ENCODE measurements at regions of chr3 and their contacts with region 1.

Region 1: GRCh38 chr3:71006810-71007785 is 576.4 kb downstream of the FOXP1 start:
- DNase-seq: no peak
- H3K4me3 Mint-ChIP-seq: no peak overlapping the region
- H3K27ac Mint-ChIP-seq: no peak overlapping the region
- H3K4me1 Mint-ChIP-seq: peaks cover 59% of the 10 kb centered on the region
- H3K27me3 Mint-ChIP-seq: no peaks in the 10 kb centered on the region

Region 2: GRCh38 chr3:70982700-70983140 is 24.4 kb before region 1 on chr3:
- intact Hi-C with region 1: loop called (anchors 2 kb)
- DNase-seq: peak; percentile 24
- H3K4me3 Mint-ChIP-seq: peak overlapping the region; percentile 52
- H3K27ac Mint-ChIP-seq: peak overlapping the region; percentile 95
- H3K4me1 Mint-ChIP-seq: peaks cover 57% of the 10 kb centered on the region
- H3K27me3 Mint-ChIP-seq: no peaks in the 10 kb centered on the region

Region 3: GRCh38 chr3:71057526-71057894 is 50.4 kb after region 1 on chr3:
- intact Hi-C with region 1: loop called (anchors 1 kb)
- DNase-seq: no peak
- H3K4me3 Mint-ChIP-seq: peak overlapping the region; percentile 58
- H3K27ac Mint-ChIP-seq: peak overlapping the region; percentile 77
- H3K4me1 Mint-ChIP-seq: peaks cover 41% of the 10 kb centered on the region
- H3K27me3 Mint-ChIP-seq: peaks cover 3% of the 10 kb centered on the region

Region 4: DNA sequence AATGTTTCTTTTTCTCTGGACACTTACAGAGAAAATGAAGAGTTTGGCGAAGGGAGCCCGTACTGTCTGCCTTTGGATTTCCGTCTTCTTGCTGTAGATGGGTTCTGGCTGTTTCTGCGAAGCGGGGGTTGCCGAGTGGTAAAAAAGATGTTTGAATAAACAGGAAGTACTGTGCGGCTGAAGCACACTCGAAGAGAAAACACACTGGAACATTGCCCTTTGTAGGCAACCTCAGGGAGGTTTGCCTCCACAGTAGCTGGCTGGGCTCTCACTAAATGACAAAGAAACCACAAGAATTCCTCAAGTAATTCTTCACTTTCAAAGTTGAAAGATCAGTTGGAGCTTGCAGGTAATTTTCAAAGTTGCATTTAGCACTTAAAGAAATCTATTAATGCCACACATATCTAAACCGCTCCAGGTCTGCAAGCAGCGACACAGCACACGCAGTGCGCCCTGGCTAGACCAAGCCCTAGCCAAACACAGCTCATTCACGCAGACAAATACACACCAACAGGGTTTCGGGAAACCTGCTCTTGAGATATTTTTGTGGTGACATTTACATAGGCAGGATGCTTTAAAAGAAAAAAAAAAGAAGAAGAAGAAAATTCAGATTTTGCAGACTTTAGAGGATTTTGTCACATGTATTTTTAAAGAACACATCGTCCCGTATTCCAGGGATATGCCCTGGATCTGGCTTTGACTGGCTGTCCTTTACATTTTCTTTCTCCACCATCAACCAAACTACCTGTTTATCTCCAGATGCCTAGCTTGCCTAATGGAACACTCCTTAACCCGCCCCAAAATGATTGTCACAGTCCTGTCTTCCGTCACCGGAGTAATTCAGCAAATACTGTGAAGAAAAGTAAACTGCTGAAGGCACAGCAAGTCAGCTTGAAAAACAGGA is 123.6 kb after region 1 on chr3:
- intact Hi-C with region 1: loop called (anchors 1 kb)
- DNase-seq: peak; percentile 67
- H3K4me3 Mint-ChIP-seq: peak overlapping the region; percentile 89
- H3K27ac Mint-ChIP-seq: peak overlapping the region; percentile 93
- H3K4me1 Mint-ChIP-seq: peaks cover 65% of the 10 kb centered on the region
- H3K27me3 Mint-ChIP-seq: no peaks in the 10 kb centered on the region

Region 5: GRCh38 chr3:71389911-71390573 is 382.9 kb after region 1 on chr3:
- intact Hi-C with region 1: loop called (anchors 1 kb)
- DNase-seq: no peak
- H3K4me3 Mint-ChIP-seq: peak overlapping the region; percentile 10
- H3K27ac Mint-ChIP-seq: peak overlapping the region; percentile 27
- H3K4me1 Mint-ChIP-seq: peaks cover 33% of the 10 kb centered on the region
- H3K27me3 Mint-ChIP-seq: peaks cover 18% of the 10 kb centered on the region

Region 6: DNA sequence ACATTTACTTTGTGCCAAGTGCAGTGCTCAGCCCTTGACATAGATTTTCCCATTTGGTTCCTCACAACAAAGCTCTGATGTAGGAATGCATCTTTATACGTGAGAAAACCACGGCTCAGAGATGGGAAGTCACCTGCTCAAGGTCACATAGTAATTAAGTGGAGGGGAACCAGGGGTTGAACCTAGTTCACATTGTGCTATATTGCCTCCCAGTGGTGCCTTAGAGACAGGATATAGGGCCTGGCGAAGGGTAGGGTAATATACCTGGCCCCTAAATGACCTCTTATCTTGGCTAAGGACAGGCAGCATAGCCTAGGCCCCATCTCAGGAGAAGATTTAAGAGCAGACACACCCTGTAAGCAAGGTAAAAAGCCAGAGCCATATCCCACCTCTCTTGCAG is 504.9 kb after region 1 on chr3:
- intact Hi-C with region 1: loop called (anchors 1 kb)
- DNase-seq: peak; percentile 3
- H3K4me3 Mint-ChIP-seq: no peak overlapping the region
- H3K27ac Mint-ChIP-seq: no peak overlapping the region
- H3K4me1 Mint-ChIP-seq: peaks cover 8% of the 10 kb centered on the region
- H3K27me3 Mint-ChIP-seq: peaks cover 3% of the 10 kb centered on the region

Measured in activated T-helper 1 cell treated with anti-CD3 and anti-CD28 coated beads, Interleukin-12 subunit alpha, Interleukin-12 subunit beta, Interleukin-2, Interleukin-4 antibody, amounts not matched to agents 30 ng/mL and 10 ng/mL and 1 ng/mL, durations not matched to agents 14 hours and 24 hours and 36 hours (primary cell).